HepG2 (cell line): ENCODE measurements at regions of chr6 and their contacts with region 1.

Region 1: GRCh38 chr6:154868143-154868594 is 126.9 kb upstream of the TIAM2 start:
- DNase-seq: peak; percentile 79
- ATAC-seq: peak; percentile 41
- H3K4me3 ChIP-seq: no peak overlapping the region
- H3K27ac ChIP-seq: no peak overlapping the region
- H3K4me1 ChIP-seq: peaks cover 15% of the 10 kb centered on the region
- H3K27me3 ChIP-seq: no peaks in the 10 kb centered on the region
- CTCF ChIP-seq: peak; percentile 79
- EP300 ChIP-seq: no peak
- POLR2A ChIP-seq: no peak
- RAD21 ChIP-seq: peak; percentile 80

Region 2: GRCh38 chr6:154773610-154774089 is 94.5 kb before region 1 on chr6:
- CTCF ChIA-PET with region 1: no interaction called
- POLR2A ChIA-PET with region 1: no interaction called
- in situ Hi-C with region 1: no loop called
- intact Hi-C with region 1: no loop called
- DNase-seq: no peak
- ATAC-seq: no peak
- H3K4me3 ChIP-seq: no peak overlapping the region
- H3K27ac ChIP-seq: no peak overlapping the region
- H3K4me1 ChIP-seq: peaks cover 15% of the 10 kb centered on the region; the same call in 1 of the 2 replicates
- H3K27me3 ChIP-seq: no peaks in the 10 kb centered on the region
- CTCF ChIP-seq: no peak
- EP300 ChIP-seq: no peak
- POLR2A ChIP-seq: no peak
- RAD21 ChIP-seq: no peak

Region 3: GRCh38 chr6:154852687-154853086 is 15.5 kb before region 1 on chr6:
- CTCF ChIA-PET with region 1: no interaction called
- POLR2A ChIA-PET with region 1: no interaction called
- in situ Hi-C with region 1: no loop called
- intact Hi-C with region 1: loop called (anchors 1 kb)
- DNase-seq: peak; percentile 14
- ATAC-seq: peak; percentile 35
- H3K4me3 ChIP-seq: no peak overlapping the region
- H3K27ac ChIP-seq: no peak overlapping the region
- H3K4me1 ChIP-seq: peaks cover 33% of the 10 kb centered on the region
- H3K27me3 ChIP-seq: no peaks in the 10 kb centered on the region
- CTCF ChIP-seq: no peak
- EP300 ChIP-seq: no peak
- POLR2A ChIP-seq: no peak
- RAD21 ChIP-seq: no peak

Region 4: GRCh38 chr6:155041741-155042279 is 173.6 kb after region 1 on chr6:
- CTCF ChIA-PET with region 1: no interaction called
- POLR2A ChIA-PET with region 1: no interaction called
- in situ Hi-C with region 1: no loop called
- intact Hi-C with region 1: no loop called
- DNase-seq: no peak
- ATAC-seq: no peak; the same call in 2 of the 3 replicates
- H3K4me3 ChIP-seq: no peak overlapping the region
- H3K27ac ChIP-seq: no peak overlapping the region
- H3K4me1 ChIP-seq: no peaks in the 10 kb centered on the region
- H3K27me3 ChIP-seq: no peaks in the 10 kb centered on the region
- CTCF ChIP-seq: no peak
- EP300 ChIP-seq: no peak
- POLR2A ChIP-seq: no peak
- RAD21 ChIP-seq: no peak

Region 5: GRCh38 chr6:155248008-155249001 is 380.1 kb after region 1 on chr6:
- CTCF ChIA-PET with region 1: no interaction called
- POLR2A ChIA-PET with region 1: no interaction called
- in situ Hi-C with region 1: no loop called
- intact Hi-C with region 1: loop called (anchors 1 kb)
- DNase-seq: peak; percentile 43
- ATAC-seq: peak; percentile 51
- H3K4me3 ChIP-seq: no peak overlapping the region
- H3K27ac ChIP-seq: no peak overlapping the region
- H3K4me1 ChIP-seq: peaks cover 8% of the 10 kb centered on the region; the same call in 1 of the 2 replicates
- H3K27me3 ChIP-seq: no peaks in the 10 kb centered on the region
- CTCF ChIP-seq: peak; percentile 61
- EP300 ChIP-seq: no peak
- POLR2A ChIP-seq: peak in 1 of 2 experiments; percentile 57; a peak in 2 of 4 replicates
- RAD21 ChIP-seq: no peak